ENCODE measurements at regions of chr15 and their contacts with region 1.

Region 1: DNA sequence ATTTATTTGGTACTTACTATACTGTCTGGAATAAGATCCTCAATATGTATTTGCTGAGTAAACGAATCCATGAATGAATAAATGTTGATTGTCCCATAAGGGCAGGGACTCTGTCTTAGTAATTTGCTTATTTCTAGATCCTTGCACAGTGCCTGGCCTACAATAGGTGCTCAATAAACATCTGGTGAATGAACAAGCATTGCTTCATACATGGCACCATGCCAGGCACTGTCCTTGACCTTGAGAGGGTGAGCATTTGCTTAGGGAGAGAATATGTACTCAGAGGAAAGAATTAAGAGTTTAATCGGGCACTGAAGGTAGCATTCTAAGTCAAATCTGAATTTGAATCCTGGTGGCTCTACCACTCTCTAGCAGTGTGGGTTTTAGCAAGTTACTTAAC is 282.1 kb downstream of the THSD4 start:
- DNase-seq: no peak
- H3K4me3 ChIP-seq: no peak overlapping the region
- H3K27ac ChIP-seq: no peak overlapping the region
- H3K4me1 ChIP-seq: peaks cover 18% of the 10 kb centered on the region
- H3K27me3 ChIP-seq: no peaks in the 10 kb centered on the region
- CTCF ChIP-seq: no peak
- POLR2A ChIP-seq: no peak

Region 2: GRCh38 chr15:71170163-71170562 is 227.2 kb before region 1 on chr15:
- intact Hi-C with region 1: no loop called
- DNase-seq: no peak
- H3K4me3 ChIP-seq: no peak overlapping the region
- H3K27ac ChIP-seq: no peak overlapping the region
- H3K4me1 ChIP-seq: no peaks in the 10 kb centered on the region
- H3K27me3 ChIP-seq: no peaks in the 10 kb centered on the region
- CTCF ChIP-seq: no peak
- POLR2A ChIP-seq: no peak

Region 3: GRCh38 chr15:71329497-71330260 is 67.7 kb before region 1 on chr15:
- intact Hi-C with region 1: loop called (anchors 10 kb)
- DNase-seq: no peak
- H3K4me3 ChIP-seq: no peak overlapping the region
- H3K27ac ChIP-seq: peak overlapping the region; percentile 84
- H3K4me1 ChIP-seq: peaks cover 62% of the 10 kb centered on the region
- H3K27me3 ChIP-seq: no peaks in the 10 kb centered on the region
- CTCF ChIP-seq: no peak
- POLR2A ChIP-seq: no peak